PC-3 (cell line): ENCODE measurements at regions of chr14 and their contacts with region 1.

Region 1: DNA sequence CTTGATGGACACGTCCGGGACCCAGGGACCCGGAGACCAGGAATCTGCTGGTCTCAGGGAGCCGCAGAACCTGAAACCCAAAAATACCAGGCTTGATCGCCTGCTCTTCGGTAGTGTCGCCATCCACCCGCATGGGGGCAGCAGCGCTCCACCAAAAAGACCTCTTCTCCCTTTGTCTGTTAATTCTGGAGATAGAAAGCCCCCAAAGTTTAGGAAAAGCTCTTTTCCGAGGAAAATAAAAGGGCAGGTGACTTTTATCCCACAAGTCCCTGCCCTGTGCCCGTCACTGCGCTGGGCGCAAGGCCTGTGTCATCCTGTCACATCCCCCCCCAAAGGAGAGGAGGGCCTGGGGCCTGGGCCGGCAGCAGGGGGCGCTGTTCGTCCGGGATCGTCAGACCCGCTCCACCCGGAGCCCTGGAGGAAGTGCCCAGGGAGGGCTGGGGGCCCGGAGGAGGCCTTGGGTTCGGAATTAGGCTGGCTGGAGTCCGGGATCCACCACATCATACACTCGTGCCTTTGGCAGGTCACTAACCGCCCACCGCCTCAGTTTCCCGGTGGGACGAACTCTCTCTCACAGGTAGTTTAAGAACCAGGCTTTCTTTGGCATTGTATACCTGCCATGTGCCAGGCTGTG is 31.9 kb downstream of the DAD1 start:
- DNase-seq: peak; percentile 78
- ATAC-seq: peak; percentile 66
- H3K4me3 ChIP-seq: peak overlapping the region; percentile 57
- H3K27ac ChIP-seq: peak overlapping the region; percentile 94
- H3K4me1 ChIP-seq: peaks cover 51% of the 10 kb centered on the region
- H3K27me3 ChIP-seq: no peaks in the 10 kb centered on the region
- CTCF ChIP-seq: peak; percentile 99

Region 2: GRCh38 chr14:22314181-22314820 is 242.8 kb before region 1 on chr14:
- CTCF ChIA-PET with region 1: interaction called, 4 read pairs
- POLR2A ChIA-PET with region 1: no interaction called
- intact Hi-C with region 1: loop called (anchors 10 kb)
- DNase-seq: peak; percentile 88
- ATAC-seq: peak; percentile 52
- H3K4me3 ChIP-seq: no peak overlapping the region
- H3K27ac ChIP-seq: no peak overlapping the region
- H3K4me1 ChIP-seq: peaks cover 29% of the 10 kb centered on the region
- H3K27me3 ChIP-seq: no peaks in the 10 kb centered on the region
- CTCF ChIP-seq: peak; percentile 81

Region 3: GRCh38 chr14:22472935-22473854 is 83.9 kb before region 1 on chr14:
- CTCF ChIA-PET with region 1: no interaction called
- POLR2A ChIA-PET with region 1: no interaction called
- intact Hi-C with region 1: loop called (anchors 10 kb)
- DNase-seq: peak; percentile 72
- ATAC-seq: peak; percentile 54
- H3K4me3 ChIP-seq: no peak overlapping the region
- H3K27ac ChIP-seq: no peak overlapping the region
- H3K4me1 ChIP-seq: peaks cover 23% of the 10 kb centered on the region
- H3K27me3 ChIP-seq: no peaks in the 10 kb centered on the region
- CTCF ChIP-seq: peak; percentile 84

Region 4: DNA sequence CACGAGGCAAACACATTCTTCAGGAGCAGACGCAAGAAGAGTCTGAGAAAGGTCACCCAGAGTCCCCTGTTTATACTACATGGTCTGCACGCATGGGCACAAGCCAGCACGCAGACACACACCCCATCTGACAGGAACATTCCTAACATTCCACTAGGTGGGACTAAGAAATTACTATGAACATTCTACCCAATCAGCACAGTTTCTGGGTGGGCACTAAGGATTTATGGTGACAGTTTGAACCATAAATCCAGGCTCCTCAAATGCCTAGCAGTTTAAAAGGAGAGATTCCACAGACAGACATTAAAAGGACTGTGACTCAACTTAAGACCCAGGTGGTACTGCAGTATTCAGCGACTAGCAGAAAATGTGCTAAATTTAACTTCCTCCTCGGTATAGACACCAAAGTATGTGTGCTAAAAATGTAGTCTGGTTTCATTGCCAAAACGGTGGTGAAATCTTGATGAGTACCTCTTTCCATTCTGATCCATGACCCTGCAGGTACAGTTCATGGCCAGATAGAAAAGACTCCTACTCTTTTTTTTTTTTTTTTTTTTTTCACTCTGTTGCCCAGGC is 57.2 kb after region 1 on chr14:
- CTCF ChIA-PET with region 1: no interaction called
- POLR2A ChIA-PET with region 1: no interaction called
- intact Hi-C with region 1: no loop called
- DNase-seq: peak; percentile 97
- ATAC-seq: peak; percentile 95
- H3K4me3 ChIP-seq: no peak overlapping the region
- H3K27ac ChIP-seq: peak overlapping the region; percentile 65
- H3K4me1 ChIP-seq: peaks cover 25% of the 10 kb centered on the region
- H3K27me3 ChIP-seq: no peaks in the 10 kb centered on the region
- CTCF ChIP-seq: no peak

Region 5: DNA sequence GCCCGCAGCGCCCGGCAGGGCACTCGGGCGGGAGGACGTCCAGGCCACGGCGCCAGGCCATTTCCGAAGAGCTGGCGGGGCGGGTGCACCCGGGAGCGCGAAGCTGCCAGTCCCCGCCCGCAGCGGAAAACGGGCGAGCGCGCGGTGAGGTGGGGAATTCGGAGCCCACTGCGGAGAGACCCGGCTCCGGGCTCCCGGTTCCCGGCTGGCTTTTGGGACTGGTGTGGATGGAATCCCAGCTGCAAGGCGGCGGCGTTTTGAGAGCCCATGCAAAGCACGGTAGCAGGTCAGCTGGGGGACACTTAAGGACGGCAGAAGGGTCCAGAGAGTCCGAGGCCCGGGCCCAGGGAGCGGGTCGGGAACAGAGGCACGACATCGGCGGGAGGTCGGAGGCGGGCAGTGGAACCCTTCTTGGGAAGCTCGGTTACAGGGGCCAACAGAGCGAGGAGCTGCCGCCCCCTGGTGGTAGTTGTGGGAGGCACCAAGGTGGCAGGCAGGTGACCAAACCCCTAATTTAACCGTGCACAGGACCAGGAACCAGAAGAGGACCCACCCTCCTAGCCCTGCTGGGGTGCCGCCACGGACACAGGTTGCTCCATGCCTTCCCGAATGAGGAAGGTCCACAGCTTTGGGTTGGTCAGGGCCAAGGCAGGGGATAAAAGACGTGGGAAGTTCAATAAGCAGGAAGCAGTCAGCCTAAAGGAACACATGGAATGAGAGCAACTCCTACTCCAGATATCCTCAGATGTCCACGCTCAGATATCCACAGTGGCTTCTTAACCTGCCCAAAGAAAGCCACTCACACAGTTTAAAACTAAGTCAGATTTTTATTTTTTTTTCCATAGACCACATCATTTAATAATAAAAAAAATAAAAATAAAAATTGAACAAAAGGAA is 500.9 kb after region 1 on chr14:
- CTCF ChIA-PET with region 1: no interaction called
- POLR2A ChIA-PET with region 1: no interaction called
- intact Hi-C with region 1: loop called (anchors 5 kb)
- DNase-seq: peak; percentile 90
- ATAC-seq: peak; percentile 69
- H3K4me3 ChIP-seq: peak overlapping the region; percentile 85
- H3K27ac ChIP-seq: no peak overlapping the region
- H3K4me1 ChIP-seq: peaks cover 21% of the 10 kb centered on the region
- H3K27me3 ChIP-seq: no peaks in the 10 kb centered on the region
- CTCF ChIP-seq: peak; percentile 94